A673 (cell line): ENCODE measurements at regions of chr20 and their contacts with region 1.

Region 1: DNA sequence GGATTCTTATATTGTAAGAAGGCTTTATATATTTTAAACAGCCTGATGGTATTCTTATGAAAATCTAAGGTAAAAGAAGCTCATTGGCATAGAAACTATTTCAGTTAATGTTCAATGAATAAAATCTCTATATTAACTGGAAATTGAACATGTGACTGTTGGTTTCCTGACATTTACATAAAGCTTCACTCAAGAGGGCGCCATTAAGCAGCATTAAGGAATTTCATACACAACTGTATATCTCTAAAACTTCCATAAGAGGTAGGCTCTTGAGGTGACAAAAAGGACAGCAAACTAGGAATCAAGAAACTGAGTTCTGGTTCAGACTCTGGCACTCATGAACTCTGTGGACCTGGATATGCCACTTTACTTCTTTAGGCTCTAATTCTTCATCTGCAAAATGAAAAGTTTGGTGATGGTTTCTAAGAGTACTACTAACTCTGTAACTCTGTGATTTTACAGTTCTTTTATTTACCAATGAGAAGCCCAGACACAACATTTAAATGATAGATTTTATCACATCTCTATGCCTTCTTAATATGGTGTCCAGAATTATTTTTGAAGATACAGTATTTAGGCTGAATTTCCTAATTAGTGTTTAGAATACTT is 147.5 kb downstream of the FLRT3 start:
- DNase-seq: peak; percentile 45
- H3K4me3 ChIP-seq: no peak overlapping the region
- H3K27ac ChIP-seq: no peak overlapping the region
- H3K4me1 ChIP-seq: no peaks in the 10 kb centered on the region
- H3K27me3 ChIP-seq: no peaks in the 10 kb centered on the region
- CTCF ChIP-seq: peak; percentile 57

Region 2: GRCh38 chr20:14036567-14036966 is 153.3 kb before region 1 on chr20:
- CTCF ChIA-PET with region 1: no interaction called
- POLR2A ChIA-PET with region 1: no interaction called
- intact Hi-C with region 1: no loop called
- DNase-seq: no peak
- H3K4me3 ChIP-seq: no peak overlapping the region
- H3K27ac ChIP-seq: no peak overlapping the region
- H3K4me1 ChIP-seq: no peaks in the 10 kb centered on the region
- H3K27me3 ChIP-seq: no peaks in the 10 kb centered on the region
- CTCF ChIP-seq: no peak

Region 3: GRCh38 chr20:15196547-15197255 is 1006.8 kb after region 1 on chr20:
- CTCF ChIA-PET with region 1: interaction called, 18 read pairs
- POLR2A ChIA-PET with region 1: no interaction called
- intact Hi-C with region 1: no loop called
- DNase-seq: no peak
- H3K4me3 ChIP-seq: no peak overlapping the region
- H3K27ac ChIP-seq: no peak overlapping the region
- H3K4me1 ChIP-seq: no peaks in the 10 kb centered on the region
- H3K27me3 ChIP-seq: no peaks in the 10 kb centered on the region
- CTCF ChIP-seq: no peak